GM10248 (cell line): ENCODE measurements at regions of chr9 and their contacts with region 1.

Region 1: GRCh38 chr9:68560071-68560844 is 19.6 kb upstream of the TMEM252 start:
- DNase-seq: peak; percentile 54
- CTCF ChIP-seq: peak; percentile 58

Region 2: DNA sequence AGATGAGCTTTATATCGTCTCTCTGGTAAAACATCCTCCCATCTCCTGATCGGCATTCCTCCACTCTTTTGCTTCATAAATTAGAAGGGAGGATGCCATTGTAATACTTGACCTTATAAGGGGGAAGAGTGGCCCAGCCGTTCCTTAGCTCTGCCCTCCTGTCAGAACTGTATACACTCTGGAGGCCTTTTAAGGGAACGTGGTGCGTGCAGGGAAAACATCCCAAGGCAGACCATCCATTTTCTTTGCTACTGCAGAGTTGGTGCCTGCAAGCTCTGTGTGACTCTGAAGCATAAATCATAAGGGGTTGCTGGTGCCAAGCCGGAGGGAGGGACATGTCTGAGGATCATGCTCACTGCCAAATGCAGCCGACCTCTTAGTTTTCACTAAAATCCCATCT is 113.4 kb before region 1 on chr9:
- CTCF ChIA-PET with region 1: no interaction called
- POLR2A ChIA-PET with region 1: no interaction called
- DNase-seq: no peak
- CTCF ChIP-seq: no peak

Region 3: GRCh38 chr9:68507130-68507805 is 53.0 kb before region 1 on chr9:
- CTCF ChIA-PET with region 1: interaction called, 14 read pairs
- POLR2A ChIA-PET with region 1: no interaction called
- DNase-seq: peak; percentile 26
- CTCF ChIP-seq: peak; percentile 21

Region 4: GRCh38 chr9:68538200-68538599 is 22.1 kb before region 1 on chr9:
- CTCF ChIA-PET with region 1: interaction called, 34 read pairs
- POLR2A ChIA-PET with region 1: no interaction called
- DNase-seq: no peak
- CTCF ChIP-seq: no peak

Region 5: DNA sequence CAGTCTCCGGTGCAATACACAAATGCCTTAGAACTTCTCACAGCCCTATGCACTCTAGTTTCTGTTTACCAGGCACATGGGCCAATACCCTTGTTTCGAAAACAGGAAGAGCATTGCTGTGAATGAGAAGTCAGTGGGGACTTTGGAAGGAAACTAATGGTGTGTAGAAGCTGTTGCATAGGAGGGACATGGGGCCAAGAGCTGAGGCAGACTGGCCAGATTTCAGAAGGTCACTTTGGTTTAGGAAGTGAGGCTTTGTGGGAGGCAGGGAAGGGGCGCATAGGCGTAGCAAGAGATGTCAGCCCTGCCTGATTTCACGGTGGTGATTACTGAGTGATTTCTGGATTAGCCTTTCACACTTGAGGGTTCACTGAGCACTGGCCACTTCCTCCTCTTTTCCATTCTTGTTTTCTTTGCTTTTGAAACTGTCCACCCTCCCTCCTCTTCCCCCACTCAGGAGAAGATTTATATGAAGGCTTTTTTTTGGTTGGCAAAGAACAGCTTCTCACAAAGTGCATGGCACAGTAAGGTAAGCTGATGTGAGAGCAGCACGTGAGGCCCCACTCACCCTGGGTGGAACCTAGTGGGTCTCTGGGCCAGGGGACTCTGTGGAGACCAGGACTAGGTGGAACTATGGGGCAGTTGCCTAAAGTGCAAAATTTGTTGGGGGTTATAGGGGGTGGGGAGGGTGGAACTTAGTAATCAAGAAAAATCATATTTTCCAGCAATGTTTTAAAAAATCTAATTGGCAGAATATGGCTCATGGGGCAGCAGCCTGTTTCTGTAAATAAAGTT is 13.5 kb before region 1 on chr9:
- CTCF ChIA-PET with region 1: interaction called, 34 read pairs
- POLR2A ChIA-PET with region 1: no interaction called
- DNase-seq: peak; percentile 49
- CTCF ChIP-seq: no peak

Region 6: DNA sequence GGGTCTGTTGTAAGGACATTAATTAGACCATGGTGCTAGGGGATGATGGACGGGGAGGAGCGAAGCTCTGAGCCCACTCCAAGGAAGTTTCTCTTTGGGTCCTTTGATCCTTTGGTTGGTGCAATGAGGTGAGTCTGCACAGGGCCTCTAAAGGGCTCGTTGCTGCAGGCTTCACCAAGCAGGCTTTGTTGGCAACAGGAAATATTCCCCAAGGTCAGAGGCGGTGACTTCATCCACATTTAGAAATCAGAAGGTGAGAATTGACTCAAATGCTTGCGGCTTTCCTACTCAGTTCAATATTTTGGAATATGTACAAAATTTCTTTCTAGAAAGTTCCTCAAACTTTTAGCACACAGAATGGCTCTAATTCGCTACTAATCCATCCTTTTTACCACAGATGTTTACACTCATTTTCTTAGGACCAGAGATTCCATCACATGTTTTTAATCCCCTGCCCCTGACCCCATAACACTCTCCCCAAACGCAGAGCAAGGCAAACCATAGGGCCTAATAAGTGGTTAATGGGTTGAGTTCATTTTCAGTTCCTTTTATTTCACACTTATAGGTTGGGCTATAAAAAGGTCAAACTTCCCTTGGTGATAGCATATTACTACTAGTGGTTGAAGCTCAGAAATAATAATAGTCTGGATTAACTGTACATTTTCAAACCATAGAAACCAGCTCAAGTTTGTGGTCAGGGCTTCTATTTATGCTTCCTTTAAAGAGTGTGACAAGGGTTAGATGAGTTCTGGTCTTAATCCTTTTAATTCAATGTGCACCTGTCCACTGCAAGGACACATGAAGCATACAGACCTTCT is 17.7 kb after region 1 on chr9:
- CTCF ChIA-PET with region 1: interaction called, 131 read pairs
- POLR2A ChIA-PET with region 1: no interaction called
- DNase-seq: peak; percentile 32
- CTCF ChIP-seq: no peak

Region 7: DNA sequence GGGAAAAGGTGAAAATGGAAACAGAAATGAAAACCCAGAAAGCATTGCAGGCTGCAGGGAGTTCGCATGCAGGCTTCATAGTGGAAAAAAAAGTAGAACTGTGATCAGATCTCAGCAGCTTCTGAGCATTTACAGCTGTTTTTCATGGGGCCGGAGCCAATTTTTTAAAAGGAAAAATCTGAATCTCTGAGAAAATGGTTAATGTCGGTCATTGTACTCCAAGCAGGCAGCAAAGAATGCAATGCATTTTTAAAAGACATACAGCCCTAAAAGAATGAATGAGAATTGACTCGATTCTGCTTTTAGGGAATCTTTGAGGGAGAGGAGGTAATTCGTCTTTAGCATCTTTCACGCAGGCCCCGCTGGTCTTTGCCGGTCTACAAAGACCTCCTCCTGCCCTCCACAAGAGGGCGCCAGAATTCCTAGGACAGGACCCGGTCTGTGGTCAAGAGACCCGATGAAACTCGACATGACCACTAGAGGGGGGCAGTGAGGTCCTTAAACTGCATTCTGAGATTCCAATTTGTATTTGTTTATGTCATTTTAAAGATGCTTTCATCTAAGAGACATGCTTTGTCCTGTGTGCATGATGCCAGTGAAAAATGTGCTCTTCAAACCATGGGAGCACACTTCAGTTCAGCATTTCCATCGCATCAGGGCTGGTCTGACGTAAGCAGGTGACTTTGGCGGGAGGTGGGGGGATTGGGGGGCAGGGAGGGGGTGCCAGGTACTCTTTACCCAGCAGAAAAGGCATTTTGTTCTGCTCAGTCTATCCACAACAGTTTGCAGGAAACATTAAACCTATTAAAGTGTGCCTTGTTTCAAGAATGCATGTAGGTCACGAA is 24.2 kb after region 1 on chr9:
- CTCF ChIA-PET with region 1: interaction called, 12 read pairs
- POLR2A ChIA-PET with region 1: no interaction called
- DNase-seq: peak; percentile 86
- CTCF ChIP-seq: peak; percentile 99